Panc1 (cell line): ENCODE measurements at regions of chr5 and their contacts with region 1.

Region 1: GRCh38 chr5:147935032-147935431 is 28.7 kb upstream of the C5orf46 start:
- DNase-seq: peak; percentile 62
- ATAC-seq: peak; percentile 78; the same call in 1 of the 2 replicates
- H3K4me3 ChIP-seq: no peak overlapping the region
- H3K27ac ChIP-seq: no peak overlapping the region
- H3K4me1 ChIP-seq: no peaks in the 10 kb centered on the region
- H3K27me3 ChIP-seq: no peaks in the 10 kb centered on the region
- CTCF ChIP-seq: peak; percentile 42; the same call in 1 of the 2 replicates

Region 2: GRCh38 chr5:147857302-147858129 is 77.5 kb before region 1 on chr5:
- CTCF ChIA-PET with region 1: no interaction called
- POLR2A ChIA-PET with region 1: no interaction called
- in situ Hi-C with region 1: no loop called
- intact Hi-C with region 1: loop called (anchors 1 kb)
- DNase-seq: peak; percentile 52
- ATAC-seq: no peak
- H3K4me3 ChIP-seq: no peak overlapping the region
- H3K27ac ChIP-seq: no peak overlapping the region
- H3K4me1 ChIP-seq: no peaks in the 10 kb centered on the region
- H3K27me3 ChIP-seq: no peaks in the 10 kb centered on the region
- CTCF ChIP-seq: peak; percentile 76; the same call in 1 of the 2 replicates

Region 3: GRCh38 chr5:147887024-147887627 is 47.9 kb before region 1 on chr5:
- CTCF ChIA-PET with region 1: no interaction called
- POLR2A ChIA-PET with region 1: no interaction called
- in situ Hi-C with region 1: no loop called
- intact Hi-C with region 1: loop called (anchors 1 kb)
- DNase-seq: no peak
- ATAC-seq: no peak
- H3K4me3 ChIP-seq: no peak overlapping the region
- H3K27ac ChIP-seq: no peak overlapping the region
- H3K4me1 ChIP-seq: no peaks in the 10 kb centered on the region
- H3K27me3 ChIP-seq: no peaks in the 10 kb centered on the region
- CTCF ChIP-seq: peak; percentile 63; the same call in 1 of the 2 replicates

Region 4: DNA sequence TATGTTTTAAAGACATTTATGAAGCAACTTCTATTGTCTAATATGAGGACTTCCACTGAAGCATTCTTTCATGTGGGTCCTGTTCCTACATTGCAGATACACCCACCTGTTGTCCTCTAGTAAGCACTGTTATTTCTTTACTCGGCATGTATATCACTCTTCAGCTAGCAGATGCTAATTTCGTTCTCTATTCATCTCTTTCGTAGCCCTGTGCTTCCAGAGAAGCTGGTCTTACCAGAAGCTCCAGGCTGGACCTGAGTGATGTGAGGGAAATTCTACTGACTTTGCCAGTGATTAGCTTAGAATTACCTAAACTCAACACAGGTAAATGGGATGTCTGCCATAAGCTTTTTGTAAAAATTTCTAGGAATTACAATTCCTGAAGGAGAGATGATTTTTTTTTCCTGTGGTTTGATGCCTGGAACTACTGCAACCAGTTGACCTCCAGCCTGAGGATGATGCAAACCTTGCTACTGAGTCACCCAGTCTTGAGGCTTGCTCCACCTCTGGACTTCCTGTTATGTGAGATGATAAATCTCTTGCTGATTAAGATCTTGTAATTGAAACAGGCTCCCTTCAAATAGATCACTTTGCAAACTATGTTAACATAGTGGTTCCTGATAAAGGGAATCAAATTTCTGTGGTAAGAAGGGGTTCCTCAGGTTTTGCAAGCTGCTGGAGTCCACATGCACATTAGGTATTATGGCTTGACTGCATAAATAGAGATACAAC is 76.5 kb after region 1 on chr5:
- CTCF ChIA-PET with region 1: no interaction called
- POLR2A ChIA-PET with region 1: no interaction called
- in situ Hi-C with region 1: no loop called
- intact Hi-C with region 1: no loop called
- DNase-seq: peak; percentile 20
- ATAC-seq: no peak
- H3K4me3 ChIP-seq: no peak overlapping the region
- H3K27ac ChIP-seq: no peak overlapping the region
- H3K4me1 ChIP-seq: no peaks in the 10 kb centered on the region
- H3K27me3 ChIP-seq: no peaks in the 10 kb centered on the region
- CTCF ChIP-seq: no peak

Region 5: DNA sequence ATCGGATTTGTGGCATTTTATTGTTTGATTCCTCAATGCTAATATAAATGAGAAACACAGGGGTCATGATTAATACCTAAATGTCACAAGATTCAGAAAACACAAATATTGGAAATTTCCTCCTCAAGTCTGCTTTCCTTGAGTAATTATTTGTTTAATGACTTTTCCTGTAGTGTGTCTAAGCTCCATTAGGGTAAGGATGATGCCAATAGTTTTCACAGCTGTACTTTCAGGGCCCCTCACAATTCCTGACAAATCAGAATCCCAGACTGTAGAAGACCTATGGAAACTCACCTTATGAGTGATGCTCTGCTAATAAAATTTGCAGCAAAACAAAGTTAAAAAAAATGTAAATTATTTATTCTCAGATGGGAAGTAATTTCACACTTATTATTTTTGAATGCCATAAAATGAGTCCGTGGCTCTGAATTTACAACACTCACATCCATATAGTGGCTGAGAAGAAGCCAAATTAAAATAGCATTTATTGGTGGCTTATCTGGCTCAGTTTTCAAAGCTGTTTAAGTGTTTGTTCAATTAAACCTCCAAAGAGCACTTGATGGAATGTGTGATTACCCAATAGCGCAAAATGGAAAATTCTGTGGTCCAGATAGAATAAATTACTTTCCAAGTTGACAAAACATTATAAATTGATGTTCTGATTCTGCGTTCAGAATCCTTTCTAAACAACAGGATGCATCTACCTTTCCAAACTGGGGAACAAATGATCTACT is 231.7 kb after region 1 on chr5:
- CTCF ChIA-PET with region 1: no interaction called
- POLR2A ChIA-PET with region 1: interaction called, 15 read pairs
- in situ Hi-C with region 1: no loop called
- intact Hi-C with region 1: no loop called
- DNase-seq: no peak
- ATAC-seq: no peak
- H3K4me3 ChIP-seq: no peak overlapping the region
- H3K27ac ChIP-seq: no peak overlapping the region
- H3K4me1 ChIP-seq: no peaks in the 10 kb centered on the region
- H3K27me3 ChIP-seq: no peaks in the 10 kb centered on the region
- CTCF ChIP-seq: no peak